Cardiac septum (tissue), 1 donor: ENCODE measurements at regions of chr17 and their contacts with region 1.

Region 1: DNA sequence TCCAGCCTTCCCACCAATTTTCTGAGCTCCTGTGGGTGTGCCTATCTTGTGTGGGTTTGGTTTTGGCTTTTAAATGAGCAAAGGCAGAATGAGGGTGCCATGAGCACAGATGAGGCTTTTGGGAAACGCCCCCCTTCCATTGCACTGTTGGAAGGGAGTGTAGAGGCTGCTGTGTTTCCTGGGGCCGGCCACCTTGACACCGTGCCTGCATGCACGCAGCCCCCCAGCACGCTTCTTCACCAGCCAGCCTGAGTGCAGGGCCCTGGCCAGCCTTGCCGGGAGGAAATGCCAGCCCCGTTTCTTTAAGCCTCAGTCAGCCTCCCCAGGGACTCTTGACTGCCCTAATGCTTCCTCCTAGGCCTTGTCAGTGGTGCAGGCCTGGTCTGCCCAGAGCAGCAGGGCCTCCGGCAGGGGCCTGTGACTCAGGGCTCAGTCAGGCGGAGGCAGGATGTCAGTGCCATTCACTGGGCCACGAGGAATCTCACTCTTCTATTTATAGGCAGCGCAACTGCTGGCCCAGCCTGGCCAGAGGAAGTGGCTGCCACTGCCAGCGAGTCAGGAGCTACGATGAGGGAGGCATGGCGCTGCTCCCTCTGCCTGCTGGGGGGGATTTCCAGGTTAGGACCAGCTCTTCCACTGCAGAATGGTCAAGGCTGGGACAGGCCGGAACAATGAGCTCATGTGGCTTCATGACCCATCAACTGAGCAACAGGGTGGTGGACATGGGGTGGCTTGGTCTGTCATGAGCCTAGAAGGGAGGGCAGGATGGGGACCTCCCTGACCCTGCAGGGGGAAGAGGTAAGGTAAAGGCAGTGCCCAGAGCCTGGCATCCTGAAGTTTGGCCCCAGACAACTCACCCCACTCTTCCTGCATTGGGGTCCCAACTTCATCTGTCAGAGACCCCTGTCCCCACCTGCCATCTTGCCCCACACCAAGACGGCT is 205.2 kb downstream of the RAB11FIP4 start:
- DNase-seq: peak; percentile 92

Region 2: DNA sequence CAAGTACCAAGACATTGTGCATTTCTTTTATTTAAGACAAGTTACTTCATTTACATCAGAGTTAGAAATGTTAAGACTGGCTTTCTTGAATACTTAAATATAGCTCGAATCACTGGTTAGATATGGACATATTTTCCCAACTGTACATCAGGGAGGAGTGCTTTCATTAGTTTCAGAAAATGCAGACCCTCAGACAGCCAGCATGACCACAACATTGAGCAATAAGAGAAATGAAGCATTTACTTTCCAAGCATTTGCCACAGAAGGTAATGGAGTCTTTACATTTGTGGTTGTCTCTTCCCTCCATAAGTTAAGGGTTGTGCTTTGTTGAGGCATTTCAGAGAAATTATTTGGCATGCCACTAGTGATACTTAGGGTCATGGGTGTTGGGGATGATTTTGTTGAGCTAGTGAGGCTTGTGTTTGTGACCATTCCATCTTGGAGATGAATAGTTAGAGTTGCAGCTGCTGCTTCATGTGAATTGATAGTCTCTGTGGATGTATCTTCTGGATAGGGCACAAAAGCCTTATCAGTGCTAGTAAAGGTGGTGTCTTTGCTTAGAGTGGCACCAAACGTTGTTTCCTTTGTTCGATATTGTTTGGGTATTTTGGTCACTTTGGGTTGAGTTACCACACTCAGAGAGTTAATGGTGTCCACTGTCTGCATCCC is 301.7 kb before region 1 on chr17:
- intact Hi-C with region 1: no loop called
- DNase-seq: no peak

Region 3: DNA sequence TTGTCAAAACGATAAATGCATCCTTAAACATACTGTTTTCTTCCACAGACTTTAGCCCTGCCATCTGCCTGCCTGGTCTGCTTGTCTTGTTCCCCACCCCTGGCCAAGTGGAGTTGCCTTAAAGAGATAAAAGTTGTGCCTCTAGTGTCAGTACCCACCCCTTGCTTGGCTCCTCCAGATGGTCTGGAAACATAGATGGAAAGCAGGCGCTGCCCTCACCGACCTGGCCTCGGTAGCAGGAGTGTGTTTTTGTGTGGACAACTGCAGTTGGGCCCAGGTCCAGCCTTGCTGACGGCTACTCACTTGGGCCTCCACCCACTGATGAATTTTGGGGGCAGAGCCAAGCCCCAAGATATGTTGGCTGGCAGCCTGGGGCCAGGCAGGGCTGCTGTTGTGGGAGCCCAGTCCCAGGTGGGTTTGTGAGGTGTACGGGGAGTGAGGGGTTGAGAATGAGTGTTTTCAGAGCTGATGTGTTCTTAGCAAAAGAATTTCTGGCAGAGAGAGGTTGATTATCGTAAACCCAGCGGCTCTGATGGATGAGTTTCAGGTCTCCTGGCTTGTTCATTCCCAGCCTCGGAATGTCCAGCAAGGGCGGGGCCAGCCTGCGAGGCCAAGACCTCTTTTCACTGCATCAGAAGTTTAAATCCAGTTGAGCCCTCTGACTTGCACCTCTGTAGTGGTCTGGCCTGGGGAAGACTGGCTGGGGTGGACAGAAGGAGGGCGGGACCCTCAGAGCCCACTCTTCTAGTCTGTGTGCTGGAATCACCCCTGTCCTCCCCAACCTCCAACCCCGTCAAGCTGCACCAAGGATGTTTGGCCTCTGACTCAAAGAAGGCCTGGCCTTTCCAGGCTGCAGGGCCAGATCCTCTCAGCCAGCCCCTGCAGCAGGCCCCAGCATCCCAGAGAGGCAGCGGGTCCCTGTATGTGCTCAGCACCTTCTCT is 25.4 kb before region 1 on chr17:
- intact Hi-C with region 1: loop called (anchors 2 kb)
- DNase-seq: peak; percentile 90

Region 4: GRCh38 chr17:31696184-31696602 is 99.5 kb after region 1 on chr17:
- intact Hi-C with region 1: loop called (anchors 1 kb)
- DNase-seq: peak; percentile 88